HCT116 (cell line): ENCODE measurements at regions of chr4 and their contacts with region 1.

Region 1: DNA sequence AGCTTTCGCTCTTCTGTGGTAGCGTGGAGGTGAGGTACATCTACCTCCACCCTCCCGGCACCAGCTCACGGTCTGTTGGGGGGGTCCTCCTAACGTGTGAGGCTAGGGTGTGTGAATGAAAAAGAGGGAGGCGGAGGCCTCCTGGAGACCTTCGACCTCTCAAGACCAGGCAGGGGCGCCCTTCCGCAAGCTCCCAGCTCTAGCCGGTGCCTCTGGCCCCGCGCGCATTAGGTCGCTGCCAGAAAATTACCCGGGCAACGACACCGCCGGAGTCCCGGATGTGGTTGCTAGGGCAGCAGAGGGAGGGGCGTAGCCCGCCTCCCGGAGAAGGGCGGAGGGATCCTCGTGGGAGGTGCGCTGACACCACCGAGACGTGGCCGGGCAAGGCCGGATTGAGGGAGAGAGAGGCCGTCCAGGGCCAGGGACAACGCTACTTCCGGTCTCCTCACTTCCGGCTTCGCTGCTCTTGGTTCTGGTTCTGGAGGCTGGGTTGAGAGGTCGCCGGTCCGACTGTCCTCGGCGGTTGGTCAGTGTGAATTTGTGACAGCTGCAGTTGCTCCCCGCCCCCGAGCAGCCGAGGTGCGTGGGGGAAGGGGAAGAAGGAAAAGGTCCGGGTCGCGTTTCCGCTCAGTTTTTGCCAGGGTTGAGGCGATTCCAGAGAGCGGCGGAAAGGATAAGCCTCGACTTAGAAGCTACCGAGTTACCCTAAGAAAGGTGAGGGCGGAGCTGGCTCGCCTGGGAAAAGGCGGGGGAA is at the starts of genes ARFIP1 and TIGD4:
- DNase-seq: peak; percentile 95
- ATAC-seq: peak; percentile 95
- H3K4me3 ChIP-seq: peak within 1 kb of the TSS; percentile 78 to 92
- H3K27ac ChIP-seq: peak within 1 kb of the TSS; percentile 68
- H3K4me1 ChIP-seq: peaks cover 5 to 21% of the 10 kb centered on the region in 2 experiments; a peak in 3 of 4 replicates
- H3K27me3 ChIP-seq: no peaks in the 10 kb centered on the region
- CTCF ChIP-seq: 0 out of 6 replicates have a peak, but pooled peaks have one; percentile 4 to 20 (median 10)
- POLR2A ChIP-seq: no peak
- RAD21 ChIP-seq: peak; percentile 37
- total RNA-seq, gene ARFIP1: 32.7 TPM
- total RNA-seq, gene TIGD4: 0.42 TPM

Region 2: GRCh38 chr4:152535903-152536544 is 243.7 kb before region 1 on chr4 and contains the start of gene FBXW7:
- CTCF ChIA-PET with region 1: no interaction called
- POLR2A ChIA-PET with region 1: no interaction called
- RAD21 ChIA-PET with region 1: no interaction called
- intact Hi-C with region 1: loop called (anchors 2 kb)
- DNase-seq: peak; percentile 96
- ATAC-seq: peak; percentile 92
- H3K4me3 ChIP-seq: peak within 1 kb of the TSS; percentile 83 to 92
- H3K27ac ChIP-seq: peak within 1 kb of the TSS; percentile 80
- H3K4me1 ChIP-seq: peaks cover 14 to 17% of the 10 kb centered on the region in 2 experiments; a peak in 3 of 4 replicates
- H3K27me3 ChIP-seq: no peaks in the 10 kb centered on the region
- CTCF ChIP-seq: no peak
- POLR2A ChIP-seq: peak; percentile 45
- RAD21 ChIP-seq: no peak
- total RNA-seq, gene FBXW7: 23.0 TPM

Region 3: DNA sequence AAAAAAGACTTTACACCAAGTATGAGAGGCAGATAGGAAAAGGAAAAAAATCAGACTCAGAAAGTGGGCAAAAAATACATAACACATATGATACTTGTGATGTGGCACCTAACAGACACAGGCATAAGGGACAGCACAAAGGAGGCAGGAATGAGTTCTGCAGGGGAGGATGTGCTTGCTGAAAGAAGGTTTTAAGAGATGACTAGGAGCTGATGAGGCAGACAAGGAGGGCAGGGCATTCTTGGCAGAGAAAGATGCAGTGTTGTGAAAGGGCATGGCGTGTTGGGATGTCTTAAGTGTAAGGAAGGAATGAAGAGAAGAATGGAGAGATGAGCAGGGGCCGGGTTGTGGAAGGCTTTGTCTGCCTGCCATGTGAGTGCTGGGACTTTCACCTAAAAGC is 50.2 kb before region 1 on chr4:
- CTCF ChIA-PET with region 1: no interaction called
- POLR2A ChIA-PET with region 1: no interaction called
- RAD21 ChIA-PET with region 1: no interaction called
- intact Hi-C with region 1: no loop called
- DNase-seq: no peak
- ATAC-seq: no peak
- H3K4me3 ChIP-seq: no peak overlapping the region
- H3K27ac ChIP-seq: no peak overlapping the region
- H3K4me1 ChIP-seq: no peaks in the 10 kb centered on the region
- H3K27me3 ChIP-seq: no peaks in the 10 kb centered on the region
- CTCF ChIP-seq: no peak
- POLR2A ChIP-seq: no peak
- RAD21 ChIP-seq: no peak